Calu3 (cell line): ENCODE measurements at regions of chr6 and their contacts with region 1.

Region 1: GRCh38 chr6:23446394-23447046 is 679.5 kb upstream of the NRSN1 start:
- DNase-seq: peak; percentile 23
- H3K4me3 Mint-ChIP-seq: no peak overlapping the region
- H3K27ac Mint-ChIP-seq: no peak overlapping the region
- H3K4me1 Mint-ChIP-seq: no peaks in the 10 kb centered on the region
- H3K27me3 Mint-ChIP-seq: no peaks in the 10 kb centered on the region
- CTCF ChIP-seq: no peak

Region 2: GRCh38 chr6:23659125-23659524 is 212.6 kb after region 1 on chr6:
- CTCF ChIA-PET with region 1: no interaction called
- intact Hi-C with region 1: loop called (anchors 5 kb)
- DNase-seq: peak; percentile 66
- H3K4me3 Mint-ChIP-seq: no peak overlapping the region
- H3K27ac Mint-ChIP-seq: no peak overlapping the region
- H3K4me1 Mint-ChIP-seq: peaks cover 26% of the 10 kb centered on the region
- H3K27me3 Mint-ChIP-seq: no peaks in the 10 kb centered on the region
- CTCF ChIP-seq: peak; percentile 63